SK-N-SH (cell line): ENCODE measurements at regions of chr7 and their contacts with region 1.

Region 1: GRCh38 chr7:123494193-123494796 is 40.1 kb downstream of the IQUB start:
- DNase-seq: peak; percentile 41
- H3K4me3 ChIP-seq: no peak overlapping the region; a peak in 1 of 4 replicates
- H3K27ac ChIP-seq: no peak overlapping the region
- H3K4me1 ChIP-seq: no peaks in the 10 kb centered on the region; a peak in 1 of 4 replicates
- H3K27me3 ChIP-seq: no peaks in the 10 kb centered on the region
- CTCF ChIP-seq: peak; percentile 98
- EP300 ChIP-seq: no peak
- RAD21 ChIP-seq: peak; percentile 92

Region 2: DNA sequence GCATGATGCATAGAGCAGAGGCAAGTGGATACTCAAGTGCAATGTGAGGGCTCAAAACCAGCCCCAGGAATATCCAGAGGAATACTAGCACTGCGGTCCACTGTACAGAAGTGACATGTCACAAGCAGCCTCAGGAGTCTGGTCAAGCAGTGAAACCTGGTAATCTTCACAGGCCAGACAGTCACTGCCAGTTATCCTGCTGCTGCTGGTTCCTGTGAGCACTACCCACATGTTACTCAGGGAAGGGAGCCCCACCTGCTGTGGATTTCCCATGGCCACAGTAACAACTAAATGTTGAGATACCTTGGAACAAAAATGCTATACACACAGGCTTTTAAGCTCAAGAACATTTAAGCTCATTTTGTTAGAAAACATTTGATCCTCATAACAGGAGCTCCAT is 898.4 kb before region 1 on chr7:
- CTCF ChIA-PET with region 1: no interaction called
- POLR2A ChIA-PET with region 1: no interaction called
- DNase-seq: no peak
- H3K4me3 ChIP-seq: no peak overlapping the region
- H3K27ac ChIP-seq: no peak overlapping the region
- H3K4me1 ChIP-seq: no peaks in the 10 kb centered on the region
- H3K27me3 ChIP-seq: no peaks in the 10 kb centered on the region
- CTCF ChIP-seq: no peak
- EP300 ChIP-seq: no peak
- RAD21 ChIP-seq: no peak

Region 3: DNA sequence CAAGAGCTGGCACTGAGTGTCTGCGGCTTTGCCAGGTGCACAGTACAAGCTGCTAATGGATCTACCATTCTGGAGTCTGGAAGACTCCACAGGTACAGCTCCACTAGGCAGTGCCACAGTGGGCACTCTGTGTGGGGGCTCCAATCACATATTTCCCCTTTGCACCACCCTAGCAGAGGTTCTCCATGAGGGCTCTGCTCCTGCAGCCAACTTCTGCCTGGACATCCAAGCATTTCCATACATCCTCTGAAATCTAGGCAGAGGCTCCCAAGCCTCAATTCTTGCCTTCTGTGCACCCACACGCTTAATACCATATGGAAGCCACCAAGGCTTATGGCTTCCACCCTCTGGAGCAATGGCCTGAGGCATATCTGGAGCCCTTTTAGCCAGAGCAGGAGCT is 10.9 kb after region 1 on chr7:
- CTCF ChIA-PET with region 1: interaction called, 29 read pairs
- POLR2A ChIA-PET with region 1: no interaction called
- DNase-seq: no peak
- H3K4me3 ChIP-seq: no peak overlapping the region; a peak in 1 of 4 replicates
- H3K27ac ChIP-seq: no peak overlapping the region
- H3K4me1 ChIP-seq: no peaks in the 10 kb centered on the region
- H3K27me3 ChIP-seq: no peaks in the 10 kb centered on the region
- CTCF ChIP-seq: no peak
- EP300 ChIP-seq: no peak
- RAD21 ChIP-seq: no peak

Region 4: GRCh38 chr7:123528265-123528664 is 34.0 kb after region 1 on chr7:
- CTCF ChIA-PET with region 1: interaction called, 19 read pairs
- POLR2A ChIA-PET with region 1: no interaction called
- DNase-seq: peak; percentile 24
- H3K4me3 ChIP-seq: peak overlapping the region; percentile 43 to 58
- H3K27ac ChIP-seq: no peak overlapping the region
- H3K4me1 ChIP-seq: peaks cover 0 to 2% of the 10 kb centered on the region in 2 experiments; a peak in 2 of 4 replicates
- H3K27me3 ChIP-seq: no peaks in the 10 kb centered on the region
- CTCF ChIP-seq: no peak
- EP300 ChIP-seq: no peak
- RAD21 ChIP-seq: no peak

Region 5: GRCh38 chr7:123548406-123548805 is 54.1 kb after region 1 on chr7:
- CTCF ChIA-PET with region 1: interaction called, 10 read pairs
- POLR2A ChIA-PET with region 1: no interaction called
- DNase-seq: no peak
- H3K4me3 ChIP-seq: no peak overlapping the region
- H3K27ac ChIP-seq: peak overlapping the region in 1 of 2 experiments; percentile 36; a peak in 2 of 4 replicates
- H3K4me1 ChIP-seq: no peaks in the 10 kb centered on the region; a peak in 2 of 4 replicates
- H3K27me3 ChIP-seq: no peaks in the 10 kb centered on the region
- CTCF ChIP-seq: no peak
- EP300 ChIP-seq: no peak
- RAD21 ChIP-seq: no peak

Region 6: GRCh38 chr7:123871998-123872867 is 377.9 kb after region 1 on chr7:
- CTCF ChIA-PET with region 1: interaction called, 23 read pairs
- POLR2A ChIA-PET with region 1: no interaction called
- DNase-seq: peak; percentile 61
- H3K4me3 ChIP-seq: no peak overlapping the region
- H3K27ac ChIP-seq: no peak overlapping the region
- H3K4me1 ChIP-seq: peaks cover 0 to 14% of the 10 kb centered on the region in 2 experiments; a peak in 2 of 4 replicates
- H3K27me3 ChIP-seq: no peaks in the 10 kb centered on the region; the same call in 1 of the 2 replicates
- CTCF ChIP-seq: peak; percentile 58
- EP300 ChIP-seq: no peak; a peak in 1 of 4 replicates
- RAD21 ChIP-seq: peak; percentile 93